WTC11 (cell line): ENCODE measurements at regions of chr11 and their contacts with region 1.

Region 1: DNA sequence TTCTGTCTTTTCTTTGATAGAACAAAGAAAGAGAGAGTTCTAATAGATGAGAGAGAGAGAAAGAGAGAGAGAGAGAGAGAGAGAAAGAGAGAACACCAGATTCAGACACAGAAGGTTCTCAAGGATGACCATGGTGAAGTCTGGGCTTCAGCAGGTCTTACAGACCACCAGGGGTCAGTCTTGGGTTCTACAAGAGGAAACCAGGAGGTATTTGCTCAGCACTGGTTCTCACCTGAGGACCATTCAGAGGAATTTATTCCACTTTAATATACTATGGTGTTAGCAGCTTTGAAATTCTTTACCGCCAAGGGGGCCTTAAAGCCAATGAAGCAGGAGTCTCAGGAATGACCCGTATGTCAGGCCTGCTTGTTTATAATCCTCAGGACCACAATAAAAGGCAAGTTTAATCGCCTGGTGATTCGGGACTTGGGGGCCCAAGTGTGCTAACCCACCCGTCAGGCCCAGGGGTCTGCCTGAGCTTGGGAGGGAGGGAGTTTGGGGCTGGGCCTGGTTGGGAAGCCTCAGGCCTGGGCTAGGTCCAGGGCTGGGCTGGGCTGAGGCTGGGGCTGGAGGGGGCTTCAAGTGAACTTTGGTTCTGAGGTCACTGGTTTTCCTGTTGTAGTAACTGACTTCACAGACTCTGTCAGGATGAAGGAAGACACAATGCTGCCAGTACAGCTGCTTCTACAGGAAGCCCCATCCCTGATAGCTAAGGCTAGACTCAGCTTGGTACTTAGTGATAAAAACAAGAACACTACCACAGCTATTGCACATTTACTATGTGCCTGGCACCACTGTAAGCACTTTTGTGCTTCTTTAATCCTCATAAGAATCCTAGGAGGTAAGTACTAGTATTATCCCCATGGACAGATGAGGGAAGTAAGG is 179.2 kb upstream of the ZBED5 start:
- DNase-seq: peak; percentile 32
- ATAC-seq: peak; percentile 97
- H3K4me3 Mint-ChIP-seq: no peak overlapping the region
- H3K27ac Mint-ChIP-seq: no peak overlapping the region
- H3K4me1 Mint-ChIP-seq: peaks cover 3% of the 10 kb centered on the region; the same call in 1 of the 2 replicates
- H3K27me3 Mint-ChIP-seq: no peaks in the 10 kb centered on the region
- CTCF ChIP-seq: no peak; the same call in 1 of the 2 replicates

Region 2: GRCh38 chr11:11069841-11070835 is 33.0 kb after region 1 on chr11:
- CTCF ChIA-PET with region 1: interaction called, 17 read pairs
- POLR2A ChIA-PET with region 1: no interaction called
- DNase-seq: no peak
- ATAC-seq: no peak
- H3K4me3 Mint-ChIP-seq: no peak overlapping the region
- H3K27ac Mint-ChIP-seq: no peak overlapping the region
- H3K4me1 Mint-ChIP-seq: peaks cover 79% of the 10 kb centered on the region
- H3K27me3 Mint-ChIP-seq: peaks cover 4% of the 10 kb centered on the region
- CTCF ChIP-seq: no peak

Region 3: DNA sequence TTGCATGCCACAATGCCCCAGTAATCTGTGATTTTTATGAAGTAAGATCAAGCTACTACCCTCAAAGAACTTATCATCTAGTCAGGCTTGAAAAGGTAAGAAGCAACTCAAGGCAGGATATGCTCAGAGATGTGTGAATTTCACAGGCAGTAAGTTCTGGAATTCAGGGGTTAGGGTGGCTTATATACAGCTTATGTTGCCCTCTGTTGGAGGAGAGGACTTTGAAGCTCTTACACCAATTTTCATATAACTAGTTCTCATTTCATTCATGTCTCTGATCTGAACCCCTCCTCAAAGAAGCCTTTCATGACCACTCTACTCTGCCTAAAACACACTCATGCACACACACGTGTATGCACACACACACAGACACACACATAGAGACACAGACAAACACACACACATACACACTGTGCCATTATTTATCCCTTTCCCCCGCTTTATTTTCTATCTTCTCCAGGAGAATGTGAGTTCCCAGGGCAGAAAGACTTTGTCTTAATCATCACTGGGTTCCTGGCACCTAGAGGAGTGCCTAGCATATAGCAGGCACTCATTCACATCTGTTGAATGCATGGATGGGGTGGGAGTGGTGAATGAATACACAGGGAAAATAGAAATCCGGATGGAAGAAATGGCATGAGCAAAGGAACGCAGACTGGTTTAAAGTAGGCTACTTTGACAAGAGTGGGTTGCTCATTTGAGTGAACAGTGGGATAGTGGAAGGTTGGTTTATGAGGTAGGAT is 41.4 kb after region 1 on chr11:
- CTCF ChIA-PET with region 1: interaction called, 29 read pairs
- POLR2A ChIA-PET with region 1: no interaction called
- DNase-seq: no peak
- ATAC-seq: peak; percentile 33
- H3K4me3 Mint-ChIP-seq: no peak overlapping the region
- H3K27ac Mint-ChIP-seq: no peak overlapping the region
- H3K4me1 Mint-ChIP-seq: peaks cover 70% of the 10 kb centered on the region
- H3K27me3 Mint-ChIP-seq: peaks cover 7% of the 10 kb centered on the region
- CTCF ChIP-seq: no peak

Region 4: GRCh38 chr11:11148104-11148509 is 111.0 kb after region 1 on chr11:
- CTCF ChIA-PET with region 1: interaction called, 19 read pairs
- POLR2A ChIA-PET with region 1: no interaction called
- DNase-seq: peak; percentile 66
- ATAC-seq: peak; percentile 99
- H3K4me3 Mint-ChIP-seq: no peak overlapping the region
- H3K27ac Mint-ChIP-seq: peak overlapping the region; percentile 68; the same call in 1 of the 2 replicates
- H3K4me1 Mint-ChIP-seq: peaks cover 15% of the 10 kb centered on the region
- H3K27me3 Mint-ChIP-seq: peaks cover 3% of the 10 kb centered on the region
- CTCF ChIP-seq: no peak

Region 5: DNA sequence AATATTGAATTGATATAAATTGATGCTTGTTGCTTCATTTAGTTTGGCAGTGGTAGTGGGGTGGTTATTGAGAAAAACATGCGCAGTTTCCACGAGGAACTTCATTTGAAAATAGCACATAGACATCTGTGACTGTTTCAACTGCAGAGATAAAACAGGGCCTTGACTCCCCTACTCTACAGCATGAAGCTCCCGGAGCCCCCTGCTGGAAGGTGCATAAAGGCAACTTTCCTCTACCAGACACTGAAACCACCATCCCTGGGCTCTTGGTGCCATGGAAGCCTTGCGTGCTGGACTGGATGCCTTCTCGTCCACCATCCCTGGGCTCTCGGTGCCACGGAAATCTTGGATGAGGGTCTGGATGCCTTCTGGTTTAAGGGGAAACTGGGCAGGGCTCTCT is 120.1 kb after region 1 on chr11:
- CTCF ChIA-PET with region 1: interaction called, 47 read pairs
- POLR2A ChIA-PET with region 1: no interaction called
- DNase-seq: peak; percentile 67
- ATAC-seq: peak; percentile 69
- H3K4me3 Mint-ChIP-seq: no peak overlapping the region
- H3K27ac Mint-ChIP-seq: no peak overlapping the region
- H3K4me1 Mint-ChIP-seq: no peaks in the 10 kb centered on the region
- H3K27me3 Mint-ChIP-seq: peaks cover 7% of the 10 kb centered on the region; the same call in 1 of the 2 replicates
- CTCF ChIP-seq: no peak

Region 6: DNA sequence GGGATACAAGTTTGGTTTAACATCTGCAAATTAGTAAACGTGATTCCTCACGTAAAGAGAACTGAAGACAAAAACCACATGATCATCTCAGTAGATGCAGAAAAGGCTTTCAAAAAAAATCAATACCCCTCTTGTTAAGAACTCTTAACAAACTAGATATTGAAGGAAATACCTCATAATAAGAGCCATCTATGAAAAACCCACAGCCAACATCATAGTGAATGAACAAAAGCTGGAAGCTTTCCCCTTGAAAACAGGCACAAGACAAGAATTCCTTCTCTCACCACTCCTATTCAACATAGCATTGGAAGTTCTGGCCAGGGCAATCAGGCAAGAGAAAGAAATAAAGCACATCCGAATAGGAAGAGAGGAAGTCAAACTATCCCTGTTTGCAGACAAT is 155.5 kb after region 1 on chr11:
- CTCF ChIA-PET with region 1: no interaction called
- POLR2A ChIA-PET with region 1: no interaction called
- DNase-seq: no peak
- ATAC-seq: no peak
- H3K4me3 Mint-ChIP-seq: no peak overlapping the region
- H3K27ac Mint-ChIP-seq: no peak overlapping the region
- H3K4me1 Mint-ChIP-seq: no peaks in the 10 kb centered on the region
- H3K27me3 Mint-ChIP-seq: peaks cover 17% of the 10 kb centered on the region
- CTCF ChIP-seq: no peak

Region 7: GRCh38 chr11:11787305-11788062 is 750.4 kb after region 1 on chr11:
- CTCF ChIA-PET with region 1: interaction called, 12 read pairs
- POLR2A ChIA-PET with region 1: no interaction called
- DNase-seq: peak; percentile 79
- ATAC-seq: peak; percentile 94
- H3K4me3 Mint-ChIP-seq: no peak overlapping the region
- H3K27ac Mint-ChIP-seq: no peak overlapping the region
- H3K4me1 Mint-ChIP-seq: peaks cover 14% of the 10 kb centered on the region
- H3K27me3 Mint-ChIP-seq: no peaks in the 10 kb centered on the region
- CTCF ChIP-seq: peak; percentile 81